ENCODE measurements at regions of chr17 and their contacts with region 1.

Region 1: DNA sequence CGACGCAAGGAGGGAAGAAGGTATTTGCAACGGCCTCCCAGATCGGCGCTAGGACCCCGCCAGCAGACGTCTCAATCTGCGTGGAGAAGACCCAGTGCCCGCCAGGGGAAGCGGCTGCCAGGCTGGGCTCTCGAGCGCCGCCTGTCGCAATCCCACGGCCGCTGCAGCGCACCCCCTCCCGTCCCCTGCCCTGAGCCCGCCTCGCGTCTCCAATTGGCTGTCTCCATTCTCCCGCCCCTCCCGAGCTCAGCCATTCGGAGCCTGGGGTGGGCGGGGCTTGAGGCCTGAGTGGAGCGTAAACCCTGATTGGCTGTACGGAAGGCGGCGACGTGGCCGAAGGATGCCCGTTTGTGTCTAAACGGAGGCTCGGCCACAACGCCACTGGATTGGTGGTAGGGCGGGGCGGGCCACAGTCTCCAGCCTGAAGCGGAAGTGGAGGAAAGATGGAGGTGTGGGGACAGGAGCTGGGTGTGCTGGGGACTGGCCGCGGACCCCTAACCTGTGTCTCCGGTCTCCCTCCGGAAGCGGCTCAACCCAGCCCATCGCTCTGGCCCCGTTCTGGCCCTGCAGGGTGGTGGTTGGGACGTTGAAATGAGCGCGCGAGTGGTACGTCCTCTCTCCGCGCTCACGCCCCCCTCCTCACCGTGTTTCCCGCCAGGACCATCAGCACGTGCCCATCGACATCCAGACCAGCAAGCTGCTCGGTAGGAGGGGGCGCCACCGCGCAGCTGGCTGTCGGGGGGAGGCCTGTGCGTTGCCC is at the start of gene CDK5RAP3:
- DNase-seq: peak; percentile 98
- ATAC-seq: peak; percentile 99
- H3K4me3 Mint-ChIP-seq: peak within 1 kb of the TSS; percentile 97
- H3K27ac Mint-ChIP-seq: peak within 1 kb of the TSS; percentile 91
- H3K4me1 Mint-ChIP-seq: peaks cover 30% of the 10 kb centered on the region
- H3K27me3 Mint-ChIP-seq: no peaks in the 10 kb centered on the region
- CTCF ChIP-seq: peak; percentile 38
- total RNA-seq, gene CDK5RAP3: 275 and 286 TPM in 2 replicates

Region 2: GRCh38 chr17:47776330-47777197 is 194.3 kb before region 1 on chr17:
- CTCF ChIA-PET with region 1: no interaction called
- POLR2A ChIA-PET with region 1: no interaction called
- intact Hi-C with region 1: no loop called
- DNase-seq: no peak
- ATAC-seq: peak; percentile 79
- H3K4me3 Mint-ChIP-seq: no peak overlapping the region
- H3K27ac Mint-ChIP-seq: no peak overlapping the region
- H3K4me1 Mint-ChIP-seq: no peaks in the 10 kb centered on the region
- H3K27me3 Mint-ChIP-seq: peaks cover 52% of the 10 kb centered on the region
- CTCF ChIP-seq: peak; percentile 41

Region 3: DNA sequence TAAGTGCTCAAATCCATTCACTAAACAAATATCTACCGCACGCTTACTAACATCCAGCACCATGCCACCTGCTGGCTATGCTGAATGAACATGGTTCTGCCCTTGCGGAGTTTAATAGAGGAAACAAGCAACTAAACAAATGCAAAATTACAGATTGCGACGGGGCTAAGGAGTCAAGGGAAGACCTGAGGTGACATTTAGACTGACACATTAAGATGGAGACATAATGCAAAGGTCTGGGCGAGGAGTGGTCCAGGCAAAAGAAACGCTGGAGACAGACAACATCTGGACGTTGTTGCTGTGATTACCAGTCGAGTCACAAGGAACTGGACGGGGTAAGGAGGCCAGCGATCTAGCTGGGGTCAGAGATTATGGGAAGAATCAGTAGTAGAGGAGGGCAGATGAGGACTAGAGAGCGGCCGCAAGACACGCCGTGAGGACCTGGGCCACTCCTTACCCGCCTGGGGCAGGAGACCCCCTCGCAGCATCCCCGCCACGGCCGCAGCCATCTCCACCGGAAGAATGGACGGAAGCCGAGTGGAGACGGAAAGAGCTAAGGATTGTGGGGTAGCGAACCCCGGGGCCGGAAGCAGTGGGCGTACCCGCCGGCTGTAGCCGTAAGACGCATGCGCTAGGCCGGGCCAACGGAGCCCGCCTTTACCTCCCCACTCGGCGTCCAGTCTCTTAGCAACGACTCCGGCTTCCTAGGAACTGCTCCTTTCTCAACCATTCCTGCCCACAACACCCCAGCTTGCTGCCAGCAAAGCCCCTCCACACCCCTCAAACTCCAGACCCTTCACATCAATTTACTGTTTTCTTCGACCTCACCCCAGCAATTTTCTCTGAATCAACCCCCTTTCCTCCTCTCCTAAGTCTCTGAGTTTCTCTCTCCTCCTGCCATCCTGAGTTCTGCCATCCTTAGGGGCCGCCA is 139.6 kb before region 1 on chr17 and contains the starts of genes LRRC46 and MRPL10:
- CTCF ChIA-PET with region 1: no interaction called
- POLR2A ChIA-PET with region 1: interaction called, 13 read pairs
- intact Hi-C with region 1: loop called (anchors 2 kb)
- DNase-seq: peak; percentile 87
- ATAC-seq: peak; percentile 96
- H3K4me3 Mint-ChIP-seq: peak within 1 kb of the TSS; percentile 96
- H3K27ac Mint-ChIP-seq: peak within 1 kb of the TSS; percentile 92
- H3K4me1 Mint-ChIP-seq: peaks cover 29% of the 10 kb centered on the region
- H3K27me3 Mint-ChIP-seq: no peaks in the 10 kb centered on the region
- CTCF ChIP-seq: no peak
- total RNA-seq, gene LRRC46: 1.5 and 1.9 TPM in 2 replicates
- total RNA-seq, gene MRPL10: 36.4 and 37.4 TPM in 2 replicates

Region 4: DNA sequence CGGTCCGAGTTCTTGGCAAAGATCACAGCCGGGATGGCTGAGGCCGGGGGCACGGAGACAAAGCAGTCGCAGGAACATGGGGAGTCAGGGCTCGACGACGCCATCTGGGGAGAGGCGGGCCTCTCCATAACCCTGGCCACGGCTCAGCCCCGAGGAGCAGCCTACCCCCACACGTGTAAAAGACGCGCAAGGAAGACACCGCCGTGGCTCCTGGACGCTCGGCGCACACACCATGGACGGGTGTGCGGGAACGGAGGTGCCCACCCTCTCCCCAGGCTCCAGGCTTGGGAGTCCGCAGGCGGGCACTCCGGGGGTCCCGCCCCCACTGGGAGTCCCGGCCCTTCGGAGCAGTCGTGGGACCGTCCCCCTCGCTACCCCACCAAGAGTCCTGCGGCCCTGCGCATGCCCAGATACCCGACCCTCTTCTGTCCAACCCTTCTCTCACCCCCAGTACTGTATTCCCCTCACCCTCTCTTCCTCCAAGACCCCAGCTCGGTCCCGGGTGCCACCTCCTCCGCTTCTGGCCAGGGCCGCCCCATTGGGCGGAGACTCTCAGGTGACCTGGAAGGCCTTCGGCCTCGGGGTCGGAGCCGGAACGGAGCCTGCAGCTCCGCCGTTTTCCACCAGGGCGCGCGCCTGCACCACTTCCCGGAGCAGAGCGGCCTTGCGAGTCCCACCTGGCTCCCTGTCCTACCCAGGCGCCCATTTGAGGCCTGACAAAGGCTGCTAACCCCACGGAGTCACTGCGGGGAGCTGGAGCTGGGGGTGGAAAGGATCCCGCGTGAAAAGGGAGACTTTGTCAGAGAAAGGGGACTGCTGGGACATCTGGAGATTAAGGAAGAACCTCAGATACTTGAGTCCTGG is 129.9 kb before region 1 on chr17 and contains the start of gene SCRN2:
- CTCF ChIA-PET with region 1: interaction called, 4 read pairs
- POLR2A ChIA-PET with region 1: interaction called, 4 read pairs
- intact Hi-C with region 1: loop called (anchors 1 kb)
- DNase-seq: peak; percentile 91
- ATAC-seq: peak; percentile 94
- H3K4me3 Mint-ChIP-seq: peak within 1 kb of the TSS; percentile 98
- H3K27ac Mint-ChIP-seq: peak within 1 kb of the TSS; percentile 79
- H3K4me1 Mint-ChIP-seq: peaks cover 23% of the 10 kb centered on the region
- H3K27me3 Mint-ChIP-seq: peaks cover 16% of the 10 kb centered on the region
- CTCF ChIP-seq: peak; percentile 61
- total RNA-seq, gene SCRN2: 32.1 and 36.3 TPM in 2 replicates

Region 5: DNA sequence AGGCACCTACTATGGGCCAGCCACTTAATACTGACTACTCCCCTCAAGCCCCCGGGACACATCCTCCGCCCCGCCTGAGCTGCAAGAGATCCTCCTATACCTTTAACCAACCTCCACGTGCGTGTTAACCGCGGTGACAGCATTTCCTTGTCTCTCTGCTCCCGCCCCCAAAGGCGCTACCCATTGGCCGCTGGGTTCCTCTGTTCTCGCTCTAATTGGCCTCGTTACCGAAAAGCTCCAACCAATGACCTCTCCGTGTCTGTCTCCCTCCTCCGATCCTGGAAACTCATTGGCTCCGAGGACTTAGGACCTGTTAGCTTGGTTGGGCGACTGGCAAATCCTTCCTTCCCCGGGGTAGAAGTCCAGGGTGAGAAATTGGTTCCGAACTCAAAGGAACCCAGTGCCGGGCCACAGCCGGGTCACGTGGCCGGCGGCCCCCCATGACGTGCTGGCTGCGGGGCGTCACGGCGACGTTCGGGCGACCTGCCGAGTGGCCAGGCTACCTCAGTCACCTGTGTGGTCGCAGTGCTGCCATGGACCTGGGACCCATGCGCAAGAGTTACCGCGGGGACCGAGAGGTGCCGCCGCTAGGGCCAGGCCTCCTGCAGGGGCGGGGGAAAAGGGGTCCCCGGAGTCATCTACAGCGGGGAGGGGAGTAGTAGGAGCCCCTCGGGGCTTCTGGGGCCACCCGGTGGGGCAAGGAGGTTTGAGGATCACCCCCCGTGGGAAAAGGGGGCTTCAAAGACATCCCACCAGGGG is 29.5 kb before region 1 on chr17 and contains the start of gene PNPO:
- CTCF ChIA-PET with region 1: interaction called, 26 read pairs
- POLR2A ChIA-PET with region 1: interaction called, 28 read pairs
- intact Hi-C with region 1: loop called (anchors 1 kb)
- DNase-seq: peak; percentile 74
- ATAC-seq: peak; percentile 99
- H3K4me3 Mint-ChIP-seq: peak within 1 kb of the TSS; percentile 91
- H3K27ac Mint-ChIP-seq: peak within 1 kb of the TSS; percentile 91
- H3K4me1 Mint-ChIP-seq: peaks cover 41% of the 10 kb centered on the region
- H3K27me3 Mint-ChIP-seq: no peaks in the 10 kb centered on the region
- CTCF ChIP-seq: no peak
- total RNA-seq, gene PNPO: 25.1 and 26.5 TPM in 2 replicates

Region 6: GRCh38 chr17:47949136-47949759 is 21.6 kb before region 1 on chr17:
- CTCF ChIA-PET with region 1: interaction called, 60 read pairs
- POLR2A ChIA-PET with region 1: interaction called, 18 read pairs
- intact Hi-C with region 1: loop called (anchors 1 kb)
- DNase-seq: peak; percentile 76
- ATAC-seq: peak; percentile 80
- H3K4me3 Mint-ChIP-seq: peak overlapping the region; percentile 72
- H3K27ac Mint-ChIP-seq: peak overlapping the region; percentile 62
- H3K4me1 Mint-ChIP-seq: peaks cover 33% of the 10 kb centered on the region
- H3K27me3 Mint-ChIP-seq: no peaks in the 10 kb centered on the region
- CTCF ChIP-seq: peak; percentile 78

Measured in activated B cell treated with CpG ODN at 0.5 μM for 24 hours (primary cell).